PC-9 (cell line): ENCODE measurements at regions of chr19 and their contacts with region 1.

Region 1: DNA sequence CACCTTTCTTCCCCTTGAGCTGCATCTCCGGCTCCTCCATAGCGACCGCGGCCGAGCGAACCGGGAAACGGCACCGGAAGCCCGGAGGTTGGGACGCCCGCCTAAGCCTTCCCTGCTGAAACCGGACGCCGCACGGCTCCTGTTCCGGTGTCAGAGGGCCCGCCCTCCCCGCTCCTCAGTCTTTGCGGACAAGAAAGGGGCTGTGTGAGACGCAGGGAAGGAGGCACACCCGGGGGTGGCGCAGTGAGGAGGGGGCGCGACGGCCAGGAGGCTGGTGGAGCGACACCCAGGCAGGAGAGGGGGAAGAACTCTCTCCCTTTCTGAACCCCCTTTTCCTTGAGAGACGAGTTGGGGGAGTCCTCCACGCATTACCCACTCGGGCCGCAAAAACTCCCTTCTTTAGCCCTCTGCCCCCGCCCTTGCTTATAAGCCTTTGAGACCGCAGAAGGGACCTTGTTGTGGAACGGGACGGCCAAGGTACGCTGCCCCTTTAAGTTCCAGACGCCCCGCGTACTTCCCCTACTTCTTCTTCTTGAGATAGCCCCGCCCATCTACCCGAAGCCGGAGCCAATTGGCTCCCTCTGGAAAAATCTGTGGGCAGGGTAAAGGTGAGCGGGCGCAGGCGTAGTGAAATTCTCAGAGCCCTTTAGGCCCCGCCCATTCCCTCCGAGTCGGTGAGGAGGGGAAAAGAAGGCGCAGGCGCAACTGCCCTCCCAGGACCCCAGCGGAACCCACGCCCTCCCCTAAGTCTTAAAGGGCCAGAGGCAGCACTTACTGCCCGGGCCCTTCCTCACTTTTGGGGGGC is at the starts of genes BORCS8 and RFXANK:
- DNase-seq: peak; percentile 98 to 99
- H3K4me3 ChIP-seq: peak within 1 kb of the TSS; percentile 84
- H3K27ac ChIP-seq: peak within 1 kb of the TSS; percentile 85
- H3K4me1 ChIP-seq: peaks cover 22% of the 10 kb centered on the region
- H3K27me3 ChIP-seq: no peaks in the 10 kb centered on the region
- CTCF ChIP-seq: no peak
- total RNA-seq, gene BORCS8: 23.1 and 24.9 TPM in 2 replicates
- total RNA-seq, gene RFXANK: 132 and 161 TPM in 2 replicates

Region 2: GRCh38 chr19:19021115-19021514 is 171.2 kb before region 1 on chr19:
- CTCF ChIA-PET with region 1: no interaction called
- POLR2A ChIA-PET with region 1: no interaction called
- intact Hi-C with region 1: no loop called
- DNase-seq: no peak
- H3K4me3 ChIP-seq: no peak overlapping the region
- H3K27ac ChIP-seq: no peak overlapping the region
- H3K4me1 ChIP-seq: no peaks in the 10 kb centered on the region
- H3K27me3 ChIP-seq: no peaks in the 10 kb centered on the region
- CTCF ChIP-seq: no peak

Region 3: GRCh38 chr19:19203012-19203856 is 11.0 kb after region 1 on chr19 and contains the start of gene NR2C2AP:
- CTCF ChIA-PET with region 1: interaction called, 3 read pairs
- POLR2A ChIA-PET with region 1: interaction called, 66 read pairs
- intact Hi-C with region 1: no loop called
- DNase-seq: peak; percentile 80 to 90
- H3K4me3 ChIP-seq: peak within 1 kb of the TSS; percentile 91
- H3K27ac ChIP-seq: peak within 1 kb of the TSS; percentile 68
- H3K4me1 ChIP-seq: peaks cover 14% of the 10 kb centered on the region
- H3K27me3 ChIP-seq: peaks cover 16% of the 10 kb centered on the region; the same call in 1 of the 2 replicates
- CTCF ChIP-seq: no peak
- total RNA-seq, gene NR2C2AP: 25.7 and 28.7 TPM in 2 replicates

Region 4: DNA sequence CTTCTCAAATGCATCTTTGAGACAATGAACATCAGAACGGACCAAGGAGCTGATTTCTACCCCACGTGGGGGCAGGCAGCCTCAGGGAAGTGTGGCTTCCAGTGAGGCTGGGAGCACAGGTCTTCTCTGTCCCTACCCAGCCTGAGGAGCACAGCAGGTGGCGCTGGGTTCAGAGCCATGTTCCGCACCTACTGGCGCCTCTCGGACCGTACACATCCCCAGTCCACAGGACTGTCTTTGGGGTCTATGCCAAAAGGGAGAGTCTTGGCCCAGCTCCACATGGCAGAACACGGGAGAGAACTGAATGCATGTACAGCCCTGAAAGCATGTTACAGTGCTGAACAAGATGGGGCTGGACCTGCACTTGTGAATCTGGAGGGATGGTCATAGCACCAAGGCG is 105.5 kb after region 1 on chr19:
- CTCF ChIA-PET with region 1: no interaction called
- POLR2A ChIA-PET with region 1: no interaction called
- intact Hi-C with region 1: no loop called
- DNase-seq: no peak
- H3K4me3 ChIP-seq: no peak overlapping the region
- H3K27ac ChIP-seq: no peak overlapping the region
- H3K4me1 ChIP-seq: no peaks in the 10 kb centered on the region
- H3K27me3 ChIP-seq: no peaks in the 10 kb centered on the region
- CTCF ChIP-seq: no peak

Region 5: GRCh38 chr19:19320362-19321142 is 128.3 kb after region 1 on chr19 and contains the starts of genes MAU2 and SUGP1:
- CTCF ChIA-PET with region 1: interaction called, 4 read pairs
- POLR2A ChIA-PET with region 1: no interaction called
- intact Hi-C with region 1: loop called (anchors 5 kb)
- DNase-seq: peak; percentile 90
- H3K4me3 ChIP-seq: peak within 1 kb of the TSS; percentile 93
- H3K27ac ChIP-seq: peak within 1 kb of the TSS; percentile 71
- H3K4me1 ChIP-seq: peaks cover 23% of the 10 kb centered on the region
- H3K27me3 ChIP-seq: no peaks in the 10 kb centered on the region
- CTCF ChIP-seq: no peak; the same call in 1 of the 2 replicates
- total RNA-seq, gene MAU2: 46.1 and 55.2 TPM in 2 replicates
- total RNA-seq, gene SUGP1: 39.9 and 56.7 TPM in 2 replicates